Activated CD4-positive, alpha-beta memory T cell treated with anti-CD3 and anti-CD28 coated beads, Interleukin-2, amount 10 ng/mL, durations not matched to agents 7 days and 5 days (primary cell): ENCODE measurements at regions of chr10 and their contacts with region 1.

Region 1: DNA sequence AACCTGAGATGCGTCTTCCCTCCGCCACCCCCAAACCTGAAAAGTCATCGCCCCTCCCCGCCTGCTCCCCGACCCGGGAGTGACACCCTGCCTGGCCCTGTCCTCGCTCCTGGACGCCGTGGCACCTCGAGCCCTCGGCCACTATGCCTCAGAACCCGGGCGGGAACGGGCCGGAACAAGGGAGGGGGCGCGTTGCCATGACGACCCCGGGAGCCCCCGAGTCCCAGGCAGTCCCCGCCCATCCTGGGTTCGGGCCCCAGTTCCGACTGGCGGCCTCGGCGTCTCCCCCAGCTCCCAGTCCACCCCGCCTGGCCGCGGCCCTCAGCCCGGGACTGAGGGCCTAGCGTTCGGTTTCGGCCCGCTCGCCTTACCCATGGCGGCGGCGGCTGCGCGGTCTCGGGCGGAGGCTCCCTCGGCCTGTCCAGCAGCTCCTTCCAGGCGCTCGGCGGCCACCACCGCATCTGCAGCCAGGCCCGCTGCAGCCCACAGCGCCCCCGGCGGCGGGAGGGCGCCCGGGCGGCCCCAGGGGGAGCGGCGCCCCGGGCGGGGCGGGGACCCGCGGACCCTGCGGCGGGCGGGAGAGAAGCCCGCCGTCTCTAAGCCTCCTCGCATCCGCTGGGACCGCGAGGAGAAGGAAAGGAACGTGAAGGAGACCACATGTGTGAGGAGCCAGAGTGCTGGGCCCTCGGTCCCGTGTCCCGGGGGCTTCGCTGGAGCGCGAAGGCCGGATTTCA is at the start of gene RUFY2:
- DNase-seq: peak; percentile 81
- H3K4me3 Mint-ChIP-seq: peak within 1 kb of the TSS; percentile 85
- H3K27ac Mint-ChIP-seq: peak within 1 kb of the TSS; percentile 70
- H3K4me1 Mint-ChIP-seq: peaks cover 15% of the 10 kb centered on the region
- H3K27me3 Mint-ChIP-seq: no peaks in the 10 kb centered on the region
- total RNA-seq, gene RUFY2: 12.2 to 13.3 TPM

Region 2: GRCh38 chr10:68106656-68107055 is 300.3 kb before region 1 on chr10:
- CTCF ChIA-PET with region 1: no interaction called
- POLR2A ChIA-PET with region 1: no interaction called
- DNase-seq: no peak
- H3K4me3 Mint-ChIP-seq: no peak overlapping the region
- H3K27ac Mint-ChIP-seq: no peak overlapping the region
- H3K4me1 Mint-ChIP-seq: no peaks in the 10 kb centered on the region
- H3K27me3 Mint-ChIP-seq: no peaks in the 10 kb centered on the region

Region 3: GRCh38 chr10:68348265-68348741 is 58.7 kb before region 1 on chr10:
- CTCF ChIA-PET with region 1: no interaction called
- POLR2A ChIA-PET with region 1: no interaction called
- DNase-seq: peak; percentile 51
- H3K4me3 Mint-ChIP-seq: no peak overlapping the region
- H3K27ac Mint-ChIP-seq: no peak overlapping the region
- H3K4me1 Mint-ChIP-seq: peaks cover 17% of the 10 kb centered on the region
- H3K27me3 Mint-ChIP-seq: no peaks in the 10 kb centered on the region

Region 4: GRCh38 chr10:68423522-68423921 is 16.5 kb after region 1 on chr10:
- CTCF ChIA-PET with region 1: interaction called, 12 read pairs
- POLR2A ChIA-PET with region 1: interaction called, 4 read pairs
- DNase-seq: peak; percentile 19
- H3K4me3 Mint-ChIP-seq: no peak overlapping the region
- H3K27ac Mint-ChIP-seq: peak overlapping the region; percentile 65
- H3K4me1 Mint-ChIP-seq: peaks cover 14% of the 10 kb centered on the region
- H3K27me3 Mint-ChIP-seq: no peaks in the 10 kb centered on the region

Region 5: DNA sequence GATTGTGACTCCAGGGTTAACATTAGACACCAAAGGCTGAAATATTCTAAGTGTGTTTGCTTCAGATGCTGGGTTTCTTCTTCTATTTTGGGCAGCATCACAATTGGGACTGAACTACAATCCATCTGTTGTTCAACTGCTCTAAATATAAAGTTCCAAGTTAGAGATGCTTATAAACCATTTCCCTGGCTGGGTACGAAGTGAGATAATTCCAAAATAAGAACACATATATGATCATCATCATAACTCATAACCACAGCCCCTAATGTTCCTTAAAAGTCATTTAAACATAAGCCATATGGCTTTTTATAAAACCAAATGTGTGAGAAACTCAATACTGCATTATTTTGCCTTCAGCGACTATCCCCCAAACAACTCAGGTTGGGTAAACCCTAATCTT is 36.0 kb after region 1 on chr10:
- CTCF ChIA-PET with region 1: no interaction called
- POLR2A ChIA-PET with region 1: no interaction called
- DNase-seq: no peak
- H3K4me3 Mint-ChIP-seq: no peak overlapping the region
- H3K27ac Mint-ChIP-seq: no peak overlapping the region
- H3K4me1 Mint-ChIP-seq: no peaks in the 10 kb centered on the region
- H3K27me3 Mint-ChIP-seq: no peaks in the 10 kb centered on the region